Mucosa of descending colon (tissue), 3 donors: ENCODE measurements at regions of chr22 and their contacts with region 1.

Region 1: DNA sequence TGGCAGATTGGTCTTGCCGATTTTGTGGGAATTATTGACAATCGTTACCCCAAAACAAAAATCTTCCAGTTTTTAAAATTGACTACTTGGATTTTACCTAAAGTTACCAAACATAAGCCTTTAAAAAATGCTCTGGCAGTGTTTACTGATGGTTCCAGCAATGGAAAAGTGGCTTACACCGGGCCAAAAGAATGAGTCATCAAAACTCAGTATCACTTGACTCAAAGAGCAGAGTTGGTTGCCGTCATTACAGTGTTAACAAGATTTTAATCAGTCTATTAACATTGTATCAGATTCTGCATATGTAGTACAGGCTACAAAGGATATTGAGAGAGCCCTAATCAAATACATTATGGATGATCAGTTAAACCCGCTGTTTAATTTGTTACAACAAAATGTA is 37.2 kb downstream of the IGLL1 start:
- DNase-seq: no peak
- ATAC-seq: no peak
- H3K4me3 ChIP-seq: no peak overlapping the region
- H3K4me1 ChIP-seq: peaks cover 3% of the 10 kb centered on the region
- CTCF ChIP-seq: no peak

Region 2: GRCh38 chr22:23467721-23468296 is 75.1 kb before region 1 on chr22:
- intact Hi-C with region 1: no loop called
- DNase-seq: no peak
- ATAC-seq: no peak
- H3K4me3 ChIP-seq: no peak overlapping the region
- H3K4me1 ChIP-seq: no peaks in the 10 kb centered on the region
- CTCF ChIP-seq: no peak

Region 3: DNA sequence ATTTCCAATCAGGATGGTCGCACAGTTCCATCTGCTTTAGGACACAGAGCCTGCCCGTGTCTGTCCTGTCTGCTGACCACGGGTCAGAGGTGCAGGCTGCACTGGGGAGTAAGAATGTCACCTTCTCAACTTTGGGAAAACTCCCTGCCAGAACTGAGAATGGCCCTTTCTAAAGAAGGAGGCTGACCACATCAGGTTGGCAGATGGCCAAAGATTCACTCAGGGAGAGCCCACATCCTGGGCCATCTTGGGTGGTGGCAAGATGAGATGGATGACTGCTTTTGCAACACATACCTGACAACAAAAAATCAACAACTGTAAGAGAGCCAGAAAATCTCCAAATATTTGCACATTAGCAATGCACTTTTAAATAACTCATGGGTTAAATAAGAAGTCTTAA is 64.7 kb before region 1 on chr22:
- intact Hi-C with region 1: no loop called
- DNase-seq: no peak
- ATAC-seq: no peak
- H3K4me3 ChIP-seq: no peak overlapping the region
- H3K4me1 ChIP-seq: no peaks in the 10 kb centered on the region
- CTCF ChIP-seq: no peak

Region 4: GRCh38 chr22:23849009-23850006 is 306.4 kb after region 1 on chr22:
- intact Hi-C with region 1: loop called in 1 of 2 experiments (anchors 10 kb)
- DNase-seq: peak; percentile 84 to 93 (median 89)
- ATAC-seq: peak; percentile 95
- H3K4me3 ChIP-seq: no peak overlapping the region
- H3K4me1 ChIP-seq: peaks cover 7% of the 10 kb centered on the region
- CTCF ChIP-seq: peak; percentile 98